ENCODE measurements at regions of chr12 and their contacts with region 1.

Region 1: DNA sequence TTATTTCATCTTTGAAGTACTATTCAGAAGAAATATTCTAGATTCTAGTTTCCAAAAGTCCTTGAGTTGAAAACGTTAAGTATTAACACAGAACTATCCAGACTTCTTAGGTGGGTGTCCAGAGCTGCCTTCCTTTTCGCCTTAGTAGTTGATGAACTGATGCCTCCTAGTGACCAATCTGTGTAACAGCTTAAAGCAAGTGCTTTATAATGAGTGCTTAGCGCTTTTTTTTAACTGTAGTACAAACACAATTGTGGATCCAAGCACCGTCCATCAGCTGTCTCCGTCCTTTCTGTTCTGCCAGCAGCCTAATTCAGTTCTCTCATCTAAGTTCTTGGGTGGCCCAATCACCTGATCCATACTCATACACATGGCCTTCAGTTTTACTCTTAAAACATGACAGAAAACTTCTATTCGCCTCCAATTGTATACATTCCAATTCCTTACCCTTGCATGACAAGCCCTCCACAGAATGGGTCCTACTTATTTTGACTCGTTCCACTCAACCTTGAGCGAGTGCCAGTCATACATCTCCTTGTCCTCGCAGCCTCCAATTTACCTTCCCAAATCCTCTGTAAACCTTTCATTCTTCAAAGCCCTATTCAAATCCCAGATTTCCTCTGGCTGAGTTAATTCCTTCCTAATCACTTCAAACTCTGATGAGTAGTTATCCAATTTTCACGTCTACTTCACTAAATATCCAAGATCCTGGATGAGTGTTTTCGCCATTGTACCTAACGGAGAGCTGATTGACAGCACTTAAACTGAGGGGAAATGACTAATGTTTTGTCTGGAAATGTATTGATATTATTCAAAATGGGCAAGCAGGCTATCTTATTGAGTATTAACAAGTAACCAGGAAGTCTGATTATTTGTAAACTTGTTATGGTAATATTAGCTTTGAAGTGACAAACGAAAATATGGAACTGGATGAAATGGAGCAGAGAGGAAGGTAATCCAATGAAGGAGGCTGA is 5.8 kb upstream of the PHLDA1 start:
- DNase-seq: peak in 1 of 2 donors; percentile 54
- ATAC-seq: peak; percentile 46 to 78 (median 72)
- H3K4me3 ChIP-seq: no peak overlapping the region
- H3K27ac ChIP-seq: no peak overlapping the region
- H3K4me1 ChIP-seq: peaks cover 0 to 33% (median 14%) of the 10 kb centered on the region in 9 donors
- H3K27me3 ChIP-seq: peaks cover 0 to 6% (median 0%) of the 10 kb centered on the region in 7 donors
- CTCF ChIP-seq: peak; percentile 63 to 92 (median 82)

Region 2: DNA sequence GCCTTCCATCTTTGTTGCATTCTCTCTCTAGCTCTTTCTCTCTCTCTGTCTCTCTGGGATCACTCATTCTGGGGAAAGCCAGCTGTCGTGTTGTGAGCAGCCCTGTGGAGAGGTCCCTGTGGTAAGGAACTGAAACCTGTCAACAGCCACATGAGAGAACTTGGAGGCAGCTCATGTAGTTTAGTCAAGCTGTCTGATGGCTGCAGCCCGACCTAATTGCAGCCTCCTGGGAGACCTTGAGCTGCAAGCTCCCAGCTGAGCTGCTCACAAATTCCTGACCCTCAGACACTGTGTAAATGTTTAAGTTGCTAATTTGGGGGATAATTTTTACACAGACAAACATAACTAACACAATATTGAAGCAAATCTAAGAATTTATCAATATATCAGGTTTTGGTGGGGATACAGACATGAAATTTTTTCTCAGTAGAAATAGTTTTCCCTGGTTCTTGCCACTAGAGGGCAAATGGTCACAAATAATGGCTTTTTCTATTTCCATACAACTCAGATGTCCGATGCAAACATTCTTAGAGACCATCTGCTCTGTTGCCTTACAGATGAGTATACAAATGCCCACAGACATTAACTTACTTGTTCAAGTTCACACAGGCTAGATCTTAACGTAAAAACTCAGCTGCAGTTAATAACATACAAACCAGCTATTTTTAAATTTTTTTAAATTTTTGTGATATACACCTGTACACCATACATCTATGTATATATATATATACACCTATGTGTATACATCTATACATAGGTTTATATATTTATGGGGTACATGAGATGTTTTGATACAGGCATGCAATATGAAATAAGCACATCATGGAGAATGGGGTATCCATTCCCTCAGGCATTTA is 510.5 kb before region 1 on chr12:
- intact Hi-C with region 1: loop called (anchors 1 to 5 kb)
- DNase-seq: no peak
- ATAC-seq: peak in 6 of 8 donors; percentile 20 to 68 (median 52)
- H3K4me3 ChIP-seq: no peak overlapping the region
- H3K27ac ChIP-seq: no peak overlapping the region
- H3K4me1 ChIP-seq: peaks cover 0 to 9% (median 0%) of the 10 kb centered on the region in 9 donors
- H3K27me3 ChIP-seq: peaks cover 0 to 6% (median 0%) of the 10 kb centered on the region in 7 donors
- CTCF ChIP-seq: peak; percentile 57 to 80 (median 67)

Region 3: DNA sequence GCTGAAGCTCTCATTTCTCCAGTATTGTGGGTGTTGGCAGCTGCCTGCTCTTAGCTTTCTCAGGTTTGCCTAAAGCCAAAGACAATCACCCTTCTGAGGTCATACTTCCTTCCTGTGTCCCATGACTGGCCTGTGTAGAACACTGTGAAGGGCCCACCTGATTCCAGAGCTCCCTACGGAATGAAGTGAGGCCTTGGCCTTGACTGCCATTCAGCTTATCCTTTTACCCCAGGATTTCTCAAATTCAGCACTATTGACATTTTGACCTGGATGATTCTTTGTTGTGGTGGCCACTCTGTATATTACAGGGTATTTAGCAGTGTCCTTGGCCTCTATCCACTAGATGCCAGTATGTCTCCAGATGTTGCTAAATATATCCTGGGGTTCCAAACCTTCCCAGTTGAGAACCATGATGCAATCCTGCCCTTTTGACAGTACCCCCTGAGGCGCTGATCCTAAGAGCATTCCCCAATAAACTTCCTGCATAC is 413.7 kb before region 1 on chr12:
- intact Hi-C with region 1: loop called in 7 of 10 experiments (anchors 5 to 10 kb)
- DNase-seq: no peak
- ATAC-seq: peak; percentile 71 to 96 (median 87)
- H3K4me3 ChIP-seq: no peak overlapping the region
- H3K27ac ChIP-seq: peak overlapping the region in 3 of 10 donors; percentile 5 to 39 (median 13)
- H3K4me1 ChIP-seq: peaks cover 0 to 9% (median 7%) of the 10 kb centered on the region in 9 donors
- H3K27me3 ChIP-seq: no peaks in the 10 kb centered on the region
- CTCF ChIP-seq: peak in 8 of 9 donors; percentile 15 to 52 (median 32)

Measured in heart right ventricle (tissue), 16 donors.